PC-3 (cell line): ENCODE measurements at regions of chr2 and their contacts with region 1.

Region 1: GRCh38 chr2:227406177-227407031 is 18.7 kb upstream of the SCYGR1 start:
- DNase-seq: peak; percentile 99
- ATAC-seq: peak; percentile 91
- H3K4me3 ChIP-seq: no peak overlapping the region
- H3K27ac ChIP-seq: peak overlapping the region; percentile 48
- H3K4me1 ChIP-seq: peaks cover 14% of the 10 kb centered on the region
- H3K27me3 ChIP-seq: no peaks in the 10 kb centered on the region
- CTCF ChIP-seq: peak; percentile 90

Region 2: DNA sequence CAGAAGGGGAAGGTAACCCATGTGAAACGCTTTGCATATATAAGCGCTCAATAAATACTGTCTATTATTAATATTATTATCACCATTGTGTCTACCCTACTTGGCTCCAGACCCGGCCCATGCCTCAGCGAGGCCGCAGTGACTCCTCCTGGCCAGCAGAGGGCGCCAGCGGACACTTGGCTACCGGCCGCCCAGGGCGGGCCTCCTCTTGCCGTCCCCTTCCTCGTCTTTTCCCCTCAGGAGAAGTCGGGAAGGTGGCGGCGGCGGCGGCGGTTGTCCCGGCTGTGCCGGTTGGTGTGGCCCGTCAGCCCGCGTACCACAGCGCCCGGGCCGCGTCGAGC is 65.5 kb after region 1 on chr2 and contains the start of gene AGFG1:
- CTCF ChIA-PET with region 1: interaction called, 4 read pairs
- POLR2A ChIA-PET with region 1: no interaction called
- intact Hi-C with region 1: loop called (anchors 1 kb)
- DNase-seq: peak; percentile 84
- ATAC-seq: peak; percentile 53
- H3K4me3 ChIP-seq: peak within 1 kb of the TSS; percentile 94
- H3K27ac ChIP-seq: no peak within 1 kb of the TSS
- H3K4me1 ChIP-seq: peaks cover 42% of the 10 kb centered on the region
- H3K27me3 ChIP-seq: no peaks in the 10 kb centered on the region
- CTCF ChIP-seq: peak; percentile 87
- total RNA-seq, gene AGFG1: 44.0 and 56.3 TPM in 2 replicates

Region 3: GRCh38 chr2:227578651-227579050 is 172.2 kb after region 1 on chr2:
- CTCF ChIA-PET with region 1: interaction called, 4 read pairs
- POLR2A ChIA-PET with region 1: no interaction called
- intact Hi-C with region 1: loop called (anchors 1 kb)
- DNase-seq: peak; percentile 14
- ATAC-seq: peak; percentile 65
- H3K4me3 ChIP-seq: no peak overlapping the region
- H3K27ac ChIP-seq: no peak overlapping the region
- H3K4me1 ChIP-seq: no peaks in the 10 kb centered on the region
- H3K27me3 ChIP-seq: no peaks in the 10 kb centered on the region
- CTCF ChIP-seq: peak; percentile 31

Region 4: GRCh38 chr2:227766373-227766883 is 360.0 kb after region 1 on chr2:
- CTCF ChIA-PET with region 1: interaction called, 3 read pairs
- POLR2A ChIA-PET with region 1: no interaction called
- intact Hi-C with region 1: loop called (anchors 1 kb)
- DNase-seq: peak; percentile 81
- ATAC-seq: peak; percentile 100
- H3K4me3 ChIP-seq: no peak overlapping the region
- H3K27ac ChIP-seq: no peak overlapping the region
- H3K4me1 ChIP-seq: no peaks in the 10 kb centered on the region
- H3K27me3 ChIP-seq: no peaks in the 10 kb centered on the region
- CTCF ChIP-seq: peak; percentile 91

Region 5: GRCh38 chr2:227871375-227871788 is 465.0 kb after region 1 on chr2 and contains the start of gene DAW1:
- CTCF ChIA-PET with region 1: no interaction called
- POLR2A ChIA-PET with region 1: no interaction called
- intact Hi-C with region 1: loop called (anchors 10 kb)
- DNase-seq: no peak
- ATAC-seq: no peak
- H3K4me3 ChIP-seq: peak within 1 kb of the TSS; percentile 17; the same call in 1 of the 2 replicates
- H3K27ac ChIP-seq: peak within 1 kb of the TSS; percentile 86
- H3K4me1 ChIP-seq: peaks cover 39% of the 10 kb centered on the region
- H3K27me3 ChIP-seq: no peaks in the 10 kb centered on the region
- CTCF ChIP-seq: no peak
- total RNA-seq, gene DAW1: 1.0 and 1.5 TPM in 2 replicates